ENCODE measurements at regions of chr21 and their contacts with region 1.

Region 1: DNA sequence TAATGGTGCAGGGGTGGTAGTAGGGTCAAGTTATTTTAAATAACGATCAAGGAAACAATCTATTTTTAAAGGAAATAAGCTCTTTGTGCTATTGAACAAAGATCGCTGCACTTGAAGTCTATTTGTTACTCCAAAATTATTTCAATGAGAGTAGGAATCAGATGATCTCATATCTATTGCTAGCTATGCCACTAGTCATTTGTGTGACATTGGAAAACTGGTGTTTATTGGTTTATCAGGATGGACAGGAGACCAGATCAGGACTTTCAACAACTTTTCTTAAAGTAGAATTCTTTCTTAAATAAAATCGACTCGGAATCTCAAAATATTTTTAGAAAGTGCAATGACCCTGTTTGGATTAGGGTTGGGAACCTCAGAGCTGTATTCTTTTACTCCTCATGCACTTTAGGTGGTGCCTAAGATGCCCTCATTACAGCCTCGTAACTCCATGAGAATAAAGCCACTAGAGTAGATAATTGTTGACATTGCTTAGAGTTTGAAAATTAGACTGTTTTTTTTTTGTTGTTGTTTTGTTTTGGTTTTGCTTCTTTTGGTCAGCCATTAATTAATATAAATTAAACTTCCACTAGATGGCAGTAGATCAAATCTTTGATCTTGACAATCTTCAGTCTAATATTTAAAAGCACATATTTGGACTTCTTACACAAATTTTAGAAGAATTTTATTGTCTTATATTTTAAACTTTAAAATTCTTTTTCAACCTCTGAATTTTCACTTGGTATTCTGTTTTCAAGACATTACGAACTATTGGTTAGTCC is 352.4 kb downstream of the USP25 start:
- DNase-seq: no peak
- H3K4me3 ChIP-seq: no peak overlapping the region
- H3K27ac ChIP-seq: no peak overlapping the region
- H3K4me1 ChIP-seq: no peaks in the 10 kb centered on the region
- H3K27me3 ChIP-seq: no peaks in the 10 kb centered on the region
- CTCF ChIP-seq: peak; percentile 65
- EP300 ChIP-seq: no peak
- RAD21 ChIP-seq: peak; percentile 56

Region 2: GRCh38 chr21:16055014-16055413 is 27.2 kb before region 1 on chr21:
- CTCF ChIA-PET with region 1: no interaction called
- POLR2A ChIA-PET with region 1: no interaction called
- DNase-seq: no peak
- H3K4me3 ChIP-seq: no peak overlapping the region
- H3K27ac ChIP-seq: no peak overlapping the region
- H3K4me1 ChIP-seq: no peaks in the 10 kb centered on the region
- H3K27me3 ChIP-seq: no peaks in the 10 kb centered on the region
- CTCF ChIP-seq: no peak
- EP300 ChIP-seq: no peak
- RAD21 ChIP-seq: no peak

Region 3: DNA sequence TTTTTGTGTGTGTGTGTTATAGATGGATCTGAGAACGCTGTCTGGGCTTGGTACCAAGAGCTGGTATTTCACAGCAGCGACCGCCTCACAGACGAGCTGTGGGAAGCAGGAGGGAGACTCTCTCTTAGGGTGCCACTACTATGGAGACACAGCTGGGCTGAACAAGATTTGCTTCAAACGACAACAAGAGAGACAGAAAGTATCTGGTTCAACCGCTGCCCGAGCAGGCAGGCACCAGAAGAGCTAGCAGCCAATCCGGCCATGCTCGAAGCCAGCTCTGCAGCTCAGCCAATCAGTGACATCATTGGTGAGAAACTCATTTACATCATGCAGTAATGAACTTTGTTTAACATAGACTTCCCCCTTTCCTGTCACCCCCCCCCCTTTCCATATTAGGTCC is 11.1 kb before region 1 on chr21:
- CTCF ChIA-PET with region 1: interaction called, 26 read pairs
- POLR2A ChIA-PET with region 1: no interaction called
- DNase-seq: peak; percentile 36
- H3K4me3 ChIP-seq: peak overlapping the region; percentile 51 to 53; a peak in 3 of 4 replicates
- H3K27ac ChIP-seq: peak overlapping the region in 1 of 2 experiments; percentile 95; a peak in 2 of 4 replicates
- H3K4me1 ChIP-seq: peaks cover 0 to 2% of the 10 kb centered on the region in 2 experiments; a peak in 2 of 4 replicates
- H3K27me3 ChIP-seq: no peaks in the 10 kb centered on the region
- CTCF ChIP-seq: no peak
- EP300 ChIP-seq: no peak
- RAD21 ChIP-seq: peak; percentile 13; the same call in 1 of the 2 replicates

Region 4: GRCh38 chr21:16330082-16330907 is 248.1 kb after region 1 on chr21:
- CTCF ChIA-PET with region 1: interaction called, 32 read pairs
- POLR2A ChIA-PET with region 1: no interaction called
- DNase-seq: peak; percentile 39
- H3K4me3 ChIP-seq: no peak overlapping the region
- H3K27ac ChIP-seq: no peak overlapping the region
- H3K4me1 ChIP-seq: no peaks in the 10 kb centered on the region; a peak in 1 of 4 replicates
- H3K27me3 ChIP-seq: no peaks in the 10 kb centered on the region
- CTCF ChIP-seq: peak; percentile 75
- EP300 ChIP-seq: no peak
- RAD21 ChIP-seq: peak; percentile 85